Endothelial cell of umbilical vein (primary cell): ENCODE measurements at regions of chr2 and their contacts with region 1.

Region 1: GRCh38 chr2:193695367-193695766 is 1500.6 kb upstream of the TMEFF2 start:
- DNase-seq: peak; percentile 70
- H3K4me3 ChIP-seq: no peak overlapping the region
- H3K27ac ChIP-seq: no peak overlapping the region
- H3K4me1 ChIP-seq: no peaks in the 10 kb centered on the region
- H3K27me3 ChIP-seq: no peaks in the 10 kb centered on the region
- CTCF ChIP-seq: peak; percentile 41 to 49
- POLR2A ChIP-seq: no peak

Region 2: DNA sequence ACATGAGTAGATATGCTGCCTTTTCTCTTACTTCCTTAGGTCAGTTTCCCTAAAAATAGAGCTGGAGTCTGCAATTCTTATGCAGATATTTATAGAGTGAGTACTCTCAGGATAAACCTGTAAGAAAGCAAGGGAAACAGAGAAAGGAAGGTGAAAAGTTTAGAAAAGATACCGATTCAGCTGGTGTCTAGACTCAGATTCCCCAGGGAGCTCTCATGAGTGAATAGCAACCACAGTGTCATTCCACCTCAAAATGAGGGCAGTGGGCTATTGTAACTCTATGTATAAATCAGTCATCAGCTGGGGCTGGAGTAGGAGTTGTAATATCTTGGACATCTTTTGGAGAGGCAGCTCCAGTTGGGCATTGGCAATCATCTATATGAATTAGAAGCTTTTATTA is 15.5 kb before region 1 on chr2:
- CTCF ChIA-PET with region 1: interaction called, 10 read pairs
- POLR2A ChIA-PET with region 1: no interaction called
- dilution Hi-C with region 1: no loop called
- intact Hi-C with region 1: no loop called
- DNase-seq: no peak
- H3K4me3 ChIP-seq: no peak overlapping the region
- H3K27ac ChIP-seq: no peak overlapping the region
- H3K4me1 ChIP-seq: no peaks in the 10 kb centered on the region
- H3K27me3 ChIP-seq: no peaks in the 10 kb centered on the region
- CTCF ChIP-seq: no peak
- POLR2A ChIP-seq: no peak

Region 3: GRCh38 chr2:193885175-193885818 is 189.9 kb after region 1 on chr2:
- CTCF ChIA-PET with region 1: interaction called, 16 read pairs
- POLR2A ChIA-PET with region 1: no interaction called
- dilution Hi-C with region 1: no loop called
- intact Hi-C with region 1: loop called (anchors 1 kb)
- DNase-seq: peak; percentile 47
- H3K4me3 ChIP-seq: no peak overlapping the region
- H3K27ac ChIP-seq: no peak overlapping the region
- H3K4me1 ChIP-seq: no peaks in the 10 kb centered on the region
- H3K27me3 ChIP-seq: no peaks in the 10 kb centered on the region
- CTCF ChIP-seq: no peak
- POLR2A ChIP-seq: no peak

Region 4: DNA sequence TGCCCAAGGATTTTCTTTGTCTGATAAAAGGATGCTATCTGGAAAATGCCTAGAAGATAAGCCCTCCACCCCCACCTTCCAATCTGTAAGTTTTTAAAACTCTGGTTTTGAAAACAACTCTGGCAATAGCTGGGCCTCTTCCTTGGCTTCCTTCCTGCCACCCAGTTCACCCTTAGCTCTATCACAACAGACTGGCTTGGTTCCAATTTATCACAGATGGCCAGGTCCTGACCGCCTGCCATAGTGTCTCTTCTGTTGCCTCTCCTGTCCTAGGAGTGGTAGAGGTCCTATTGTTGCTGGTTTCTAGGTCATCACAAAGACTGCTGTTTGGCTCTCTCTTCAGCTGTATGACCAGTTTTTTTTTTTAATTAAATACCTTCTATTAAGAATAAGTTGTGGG is 233.8 kb after region 1 on chr2:
- CTCF ChIA-PET with region 1: interaction called, 15 read pairs
- POLR2A ChIA-PET with region 1: no interaction called
- dilution Hi-C with region 1: no loop called
- intact Hi-C with region 1: no loop called
- DNase-seq: peak; percentile 63
- H3K4me3 ChIP-seq: no peak overlapping the region
- H3K27ac ChIP-seq: no peak overlapping the region
- H3K4me1 ChIP-seq: peaks cover 9% of the 10 kb centered on the region
- H3K27me3 ChIP-seq: no peaks in the 10 kb centered on the region
- CTCF ChIP-seq: no peak
- POLR2A ChIP-seq: no peak

Region 5: DNA sequence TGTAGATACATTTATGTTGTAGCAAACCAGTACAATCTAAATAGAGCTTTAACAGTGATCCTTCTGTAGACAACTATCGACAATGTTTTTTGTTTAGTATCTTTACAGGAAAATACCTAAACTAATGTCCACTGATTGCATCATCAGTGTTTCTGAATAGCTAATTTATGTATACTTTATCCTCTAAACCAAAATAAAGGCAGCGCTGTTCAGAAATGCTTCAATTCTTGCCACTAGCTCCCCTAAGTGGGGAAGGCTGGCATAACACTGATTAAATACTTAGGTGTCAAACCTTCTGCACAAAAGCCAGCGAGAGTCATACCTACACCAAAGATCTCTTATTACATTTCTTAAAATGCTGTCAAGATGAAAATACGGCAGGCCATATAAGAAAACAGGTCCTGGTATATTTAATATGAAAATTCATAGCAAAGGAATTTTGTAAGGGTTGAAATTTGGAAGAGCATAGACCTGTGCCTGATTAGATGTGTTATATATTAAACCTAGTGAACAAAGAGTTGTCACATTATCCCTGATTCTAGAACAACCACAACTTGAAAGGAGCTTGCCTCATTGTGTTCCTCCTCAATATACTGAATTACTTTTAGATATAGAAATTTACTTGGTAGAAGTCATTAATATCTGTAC is 268.2 kb after region 1 on chr2:
- CTCF ChIA-PET with region 1: interaction called, 200 read pairs
- POLR2A ChIA-PET with region 1: no interaction called
- dilution Hi-C with region 1: no loop called
- intact Hi-C with region 1: loop called (anchors 1 kb)
- DNase-seq: peak; percentile 65
- H3K4me3 ChIP-seq: no peak overlapping the region
- H3K27ac ChIP-seq: no peak overlapping the region
- H3K4me1 ChIP-seq: no peaks in the 10 kb centered on the region
- H3K27me3 ChIP-seq: no peaks in the 10 kb centered on the region
- CTCF ChIP-seq: peak; percentile 50 to 55
- POLR2A ChIP-seq: no peak

Region 6: GRCh38 chr2:194819344-194819743 is 1124.0 kb after region 1 on chr2:
- CTCF ChIA-PET with region 1: interaction called, 3 read pairs
- POLR2A ChIA-PET with region 1: no interaction called
- dilution Hi-C with region 1: no loop called
- intact Hi-C with region 1: loop called (anchors 2 kb)
- DNase-seq: peak; percentile 51
- H3K4me3 ChIP-seq: no peak overlapping the region
- H3K27ac ChIP-seq: no peak overlapping the region
- H3K4me1 ChIP-seq: peaks cover 10% of the 10 kb centered on the region
- H3K27me3 ChIP-seq: no peaks in the 10 kb centered on the region
- CTCF ChIP-seq: peak; percentile 17 to 21
- POLR2A ChIP-seq: no peak